CD4-positive, alpha-beta memory T cell (primary cell): ENCODE measurements at regions of chr18 and their contacts with region 1.

Region 1: GRCh38 chr18:23703057-23703986 is 14.1 kb downstream of the LAMA3 start:
- DNase-seq: peak; percentile 39 to 50 (median 48)
- H3K4me3 ChIP-seq: no peak overlapping the region
- H3K4me3 Mint-ChIP-seq: no peak overlapping the region
- H3K27ac ChIP-seq: no peak overlapping the region
- H3K27ac Mint-ChIP-seq: no peak overlapping the region
- H3K4me1 ChIP-seq: no peaks in the 10 kb centered on the region
- H3K4me1 Mint-ChIP-seq: no peaks in the 10 kb centered on the region
- H3K27me3 ChIP-seq: no peaks in the 10 kb centered on the region
- H3K27me3 Mint-ChIP-seq: peaks cover 14 to 31% of the 10 kb centered on the region in 2 donors

Region 2: DNA sequence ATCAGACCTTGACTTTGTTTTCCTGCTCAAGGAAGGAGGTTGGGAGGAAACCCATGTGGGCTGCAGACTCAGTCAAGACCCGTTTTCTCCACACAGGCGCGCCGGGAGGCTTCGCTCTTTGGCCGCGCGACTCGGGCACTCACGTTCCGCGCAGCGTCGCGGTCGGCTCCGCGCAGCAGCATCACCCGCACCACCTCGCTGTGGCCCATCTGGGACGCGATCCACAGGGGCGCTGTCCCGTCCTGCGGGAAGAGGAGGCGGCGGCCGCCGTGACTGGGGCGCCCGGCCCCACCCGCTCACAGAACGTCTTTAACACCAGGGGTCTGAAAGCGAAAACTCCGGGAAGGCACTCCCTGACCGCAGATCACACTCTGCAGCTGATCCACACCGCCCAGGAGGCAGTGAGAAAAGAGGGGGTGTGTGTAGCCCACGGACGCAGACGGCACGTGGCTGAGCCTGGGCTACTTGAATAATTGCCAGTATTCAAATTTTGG is 83.9 kb before region 1 on chr18:
- CTCF ChIA-PET with region 1: interaction called, 90 read pairs
- POLR2A ChIA-PET with region 1: interaction called, 3 read pairs
- intact Hi-C with region 1: loop called (anchors 1 kb)
- DNase-seq: peak in 3 of 5 donors; percentile 5 to 6 (median 5)
- H3K4me3 ChIP-seq: peak overlapping the region in 1 of 2 donors; percentile 3
- H3K4me3 Mint-ChIP-seq: peak overlapping the region; percentile 46 to 81 (median 70)
- H3K27ac ChIP-seq: no peak overlapping the region
- H3K27ac Mint-ChIP-seq: peak overlapping the region in 1 of 7 donors; percentile 1
- H3K4me1 ChIP-seq: peaks cover 11% of the 10 kb centered on the region
- H3K4me1 Mint-ChIP-seq: peaks cover 0 to 7% (median 3%) of the 10 kb centered on the region in 4 donors
- H3K27me3 ChIP-seq: peaks cover 31% of the 10 kb centered on the region
- H3K27me3 Mint-ChIP-seq: peaks cover 34 to 36% of the 10 kb centered on the region in 2 donors

Region 3: DNA sequence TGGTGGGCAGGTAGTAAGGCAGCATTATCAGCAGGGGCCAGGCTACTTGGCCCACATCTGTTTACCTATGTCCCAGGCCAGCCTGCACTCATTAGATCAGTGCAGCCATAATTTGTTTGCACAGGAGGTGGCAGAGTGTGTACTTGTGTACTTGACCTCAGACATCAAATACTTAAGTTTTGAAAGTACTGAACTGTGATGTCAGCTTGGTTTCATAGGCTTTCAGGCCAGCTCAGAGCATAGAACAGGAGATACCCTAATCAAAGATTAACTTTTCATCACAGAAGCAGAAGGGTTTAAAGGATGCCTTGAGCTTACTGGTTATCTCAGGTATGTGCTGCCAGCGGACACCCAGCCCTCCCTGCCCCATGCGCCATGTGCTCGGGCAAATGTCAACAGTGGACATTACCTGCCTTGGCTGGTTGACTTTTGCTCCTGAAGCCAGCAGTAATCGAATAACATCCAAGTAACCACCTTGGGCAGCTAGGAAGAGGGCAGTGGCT is 73.8 kb before region 1 on chr18:
- CTCF ChIA-PET with region 1: interaction called, 90 read pairs
- POLR2A ChIA-PET with region 1: no interaction called
- intact Hi-C with region 1: no loop called
- DNase-seq: no peak
- H3K4me3 ChIP-seq: no peak overlapping the region
- H3K4me3 Mint-ChIP-seq: no peak overlapping the region
- H3K27ac ChIP-seq: no peak overlapping the region
- H3K27ac Mint-ChIP-seq: peak overlapping the region in 1 of 7 donors; percentile 2
- H3K4me1 ChIP-seq: no peaks in the 10 kb centered on the region
- H3K4me1 Mint-ChIP-seq: peaks cover 0 to 4% (median under 1%) of the 10 kb centered on the region in 4 donors
- H3K27me3 ChIP-seq: no peaks in the 10 kb centered on the region
- H3K27me3 Mint-ChIP-seq: peaks cover 0 to under 1% of the 10 kb centered on the region in 2 donors

Region 4: DNA sequence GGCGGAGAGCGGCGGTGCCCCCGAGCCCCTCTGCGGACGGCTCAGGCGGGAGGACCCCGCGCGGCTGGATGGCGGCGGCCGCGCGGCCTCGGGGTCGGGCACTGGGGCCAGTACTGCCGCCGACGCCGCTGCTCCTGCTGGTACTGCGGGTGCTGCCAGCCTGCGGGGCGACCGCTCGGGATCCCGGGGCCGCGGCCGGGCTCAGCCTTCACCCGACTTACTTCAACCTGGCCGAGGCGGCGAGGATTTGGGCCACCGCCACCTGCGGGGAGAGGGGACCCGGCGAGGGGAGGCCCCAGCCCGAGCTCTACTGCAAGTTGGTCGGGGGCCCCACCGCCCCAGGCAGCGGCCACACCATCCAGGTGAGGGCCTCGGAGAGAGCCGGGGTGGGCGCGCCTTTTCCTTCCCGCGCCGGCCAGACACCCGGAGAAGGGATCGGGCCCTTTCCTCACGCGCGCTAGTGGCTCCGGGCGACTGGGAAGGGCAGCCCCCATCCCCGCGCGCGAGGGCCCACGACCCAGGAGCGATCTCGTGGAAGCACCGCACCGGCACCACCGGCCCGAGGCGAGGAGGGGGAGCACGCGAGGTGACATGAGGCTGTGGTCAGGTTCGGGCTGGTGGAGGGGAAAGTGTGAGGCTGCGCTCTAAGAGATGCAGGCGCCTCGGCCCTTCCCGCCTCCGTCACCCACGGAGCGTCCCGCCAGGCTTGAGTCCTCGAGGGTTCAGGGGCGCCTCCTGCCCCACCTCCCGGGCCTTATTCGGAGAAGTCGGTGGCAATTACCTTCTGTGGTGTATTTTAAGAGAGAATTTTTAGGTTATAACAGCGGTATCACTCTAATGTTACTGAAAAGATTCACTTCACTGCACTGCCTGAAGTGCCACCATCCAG is 13.5 kb before region 1 on chr18:
- CTCF ChIA-PET with region 1: interaction called, 14 read pairs
- POLR2A ChIA-PET with region 1: no interaction called
- intact Hi-C with region 1: no loop called
- DNase-seq: peak in 2 of 5 donors; percentile 0 to 3
- H3K4me3 ChIP-seq: peak overlapping the region in 1 of 2 donors; percentile 30
- H3K4me3 Mint-ChIP-seq: peak overlapping the region; percentile 17 to 77 (median 59)
- H3K27ac ChIP-seq: no peak overlapping the region
- H3K27ac Mint-ChIP-seq: no peak overlapping the region
- H3K4me1 ChIP-seq: peaks cover 8% of the 10 kb centered on the region
- H3K4me1 Mint-ChIP-seq: peaks cover 6 to 10% (median 7%) of the 10 kb centered on the region in 4 donors
- H3K27me3 ChIP-seq: peaks cover 16% of the 10 kb centered on the region
- H3K27me3 Mint-ChIP-seq: peaks cover 29% of the 10 kb centered on the region in 2 donors

Region 5: DNA sequence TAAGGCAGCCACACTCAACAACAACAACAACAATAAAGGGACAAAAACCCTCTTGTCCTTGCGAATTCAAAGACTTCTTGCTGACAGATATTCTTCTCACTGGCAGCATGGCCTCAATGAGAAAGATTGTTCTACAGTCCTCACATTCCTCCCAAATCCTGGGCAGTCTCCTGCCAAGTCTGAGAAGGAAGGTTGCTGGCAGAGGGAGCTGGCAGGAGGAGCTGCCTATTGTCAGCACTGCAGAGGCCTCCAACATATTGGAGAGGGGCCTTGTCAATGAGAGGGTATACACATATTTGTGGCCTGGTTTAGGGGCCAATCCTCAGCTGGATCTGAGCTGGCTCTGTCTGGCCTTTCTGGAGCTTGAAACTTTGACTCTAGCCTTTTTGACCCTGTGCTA is 49.5 kb after region 1 on chr18:
- CTCF ChIA-PET with region 1: no interaction called
- POLR2A ChIA-PET with region 1: no interaction called
- intact Hi-C with region 1: no loop called
- DNase-seq: no peak
- H3K4me3 ChIP-seq: no peak overlapping the region
- H3K4me3 Mint-ChIP-seq: no peak overlapping the region
- H3K27ac ChIP-seq: no peak overlapping the region
- H3K27ac Mint-ChIP-seq: no peak overlapping the region
- H3K4me1 ChIP-seq: no peaks in the 10 kb centered on the region
- H3K4me1 Mint-ChIP-seq: peaks cover 0 to 1% (median 0%) of the 10 kb centered on the region in 4 donors
- H3K27me3 ChIP-seq: no peaks in the 10 kb centered on the region
- H3K27me3 Mint-ChIP-seq: peaks cover 5 to 7% of the 10 kb centered on the region in 2 donors

Region 6: GRCh38 chr18:24075731-24076130 is 372.4 kb after region 1 on chr18:
- CTCF ChIA-PET with region 1: no interaction called
- POLR2A ChIA-PET with region 1: no interaction called
- intact Hi-C with region 1: no loop called
- DNase-seq: no peak
- H3K4me3 ChIP-seq: no peak overlapping the region
- H3K4me3 Mint-ChIP-seq: peak overlapping the region in 5 of 8 donors; percentile 48 to 70 (median 64)
- H3K27ac ChIP-seq: no peak overlapping the region
- H3K27ac Mint-ChIP-seq: peak overlapping the region; percentile 79 to 97 (median 87)
- H3K4me1 ChIP-seq: peaks cover 22% of the 10 kb centered on the region
- H3K4me1 Mint-ChIP-seq: peaks cover 38 to 78% (median 57%) of the 10 kb centered on the region in 4 donors
- H3K27me3 ChIP-seq: no peaks in the 10 kb centered on the region
- H3K27me3 Mint-ChIP-seq: no peaks in the 10 kb centered on the region